ENCODE measurements at regions of chrX and their contacts with region 1.

Region 1: GRCh38 chrX:13087322-13088155 is 43.1 kb upstream of the FAM9C start:
- DNase-seq: peak; percentile 68
- H3K4me3 Mint-ChIP-seq: peak overlapping the region; percentile 81
- H3K27ac Mint-ChIP-seq: peak overlapping the region; percentile 99
- H3K4me1 Mint-ChIP-seq: peaks cover 85% of the 10 kb centered on the region
- H3K27me3 Mint-ChIP-seq: no peaks in the 10 kb centered on the region

Region 2: GRCh38 chrX:12825801-12826200 is 261.7 kb before region 1 on chrX:
- CTCF ChIA-PET with region 1: no interaction called
- POLR2A ChIA-PET with region 1: no interaction called
- DNase-seq: no peak
- H3K4me3 Mint-ChIP-seq: no peak overlapping the region
- H3K27ac Mint-ChIP-seq: no peak overlapping the region
- H3K4me1 Mint-ChIP-seq: no peaks in the 10 kb centered on the region
- H3K27me3 Mint-ChIP-seq: peaks cover 6% of the 10 kb centered on the region

Region 3: GRCh38 chrX:12946838-12947544 is 140.5 kb before region 1 on chrX:
- CTCF ChIA-PET with region 1: interaction called, 273 read pairs
- POLR2A ChIA-PET with region 1: interaction called, 428 read pairs
- DNase-seq: peak; percentile 78
- H3K4me3 Mint-ChIP-seq: peak overlapping the region; percentile 45
- H3K27ac Mint-ChIP-seq: peak overlapping the region; percentile 85
- H3K4me1 Mint-ChIP-seq: peaks cover 57% of the 10 kb centered on the region
- H3K27me3 Mint-ChIP-seq: no peaks in the 10 kb centered on the region

Region 4: GRCh38 chrX:12984629-12985319 is 102.8 kb before region 1 on chrX:
- CTCF ChIA-PET with region 1: interaction called, 210 read pairs
- POLR2A ChIA-PET with region 1: interaction called, 1,502 read pairs
- DNase-seq: peak; percentile 72
- H3K4me3 Mint-ChIP-seq: peak overlapping the region; percentile 48
- H3K27ac Mint-ChIP-seq: peak overlapping the region; percentile 100
- H3K4me1 Mint-ChIP-seq: peaks cover 74% of the 10 kb centered on the region
- H3K27me3 Mint-ChIP-seq: no peaks in the 10 kb centered on the region

Region 5: GRCh38 chrX:13005661-13006473 is 81.7 kb before region 1 on chrX:
- CTCF ChIA-PET with region 1: interaction called, 31 read pairs
- POLR2A ChIA-PET with region 1: interaction called, 380 read pairs
- DNase-seq: no peak
- H3K4me3 Mint-ChIP-seq: peak overlapping the region; percentile 55
- H3K27ac Mint-ChIP-seq: peak overlapping the region; percentile 97
- H3K4me1 Mint-ChIP-seq: peaks cover 79% of the 10 kb centered on the region
- H3K27me3 Mint-ChIP-seq: no peaks in the 10 kb centered on the region

Region 6: GRCh38 chrX:13051529-13052172 is 35.9 kb before region 1 on chrX:
- CTCF ChIA-PET with region 1: interaction called, 15 read pairs
- POLR2A ChIA-PET with region 1: interaction called, 111 read pairs
- DNase-seq: peak; percentile 20
- H3K4me3 Mint-ChIP-seq: no peak overlapping the region
- H3K27ac Mint-ChIP-seq: peak overlapping the region; percentile 92
- H3K4me1 Mint-ChIP-seq: peaks cover 65% of the 10 kb centered on the region
- H3K27me3 Mint-ChIP-seq: no peaks in the 10 kb centered on the region

Region 7: DNA sequence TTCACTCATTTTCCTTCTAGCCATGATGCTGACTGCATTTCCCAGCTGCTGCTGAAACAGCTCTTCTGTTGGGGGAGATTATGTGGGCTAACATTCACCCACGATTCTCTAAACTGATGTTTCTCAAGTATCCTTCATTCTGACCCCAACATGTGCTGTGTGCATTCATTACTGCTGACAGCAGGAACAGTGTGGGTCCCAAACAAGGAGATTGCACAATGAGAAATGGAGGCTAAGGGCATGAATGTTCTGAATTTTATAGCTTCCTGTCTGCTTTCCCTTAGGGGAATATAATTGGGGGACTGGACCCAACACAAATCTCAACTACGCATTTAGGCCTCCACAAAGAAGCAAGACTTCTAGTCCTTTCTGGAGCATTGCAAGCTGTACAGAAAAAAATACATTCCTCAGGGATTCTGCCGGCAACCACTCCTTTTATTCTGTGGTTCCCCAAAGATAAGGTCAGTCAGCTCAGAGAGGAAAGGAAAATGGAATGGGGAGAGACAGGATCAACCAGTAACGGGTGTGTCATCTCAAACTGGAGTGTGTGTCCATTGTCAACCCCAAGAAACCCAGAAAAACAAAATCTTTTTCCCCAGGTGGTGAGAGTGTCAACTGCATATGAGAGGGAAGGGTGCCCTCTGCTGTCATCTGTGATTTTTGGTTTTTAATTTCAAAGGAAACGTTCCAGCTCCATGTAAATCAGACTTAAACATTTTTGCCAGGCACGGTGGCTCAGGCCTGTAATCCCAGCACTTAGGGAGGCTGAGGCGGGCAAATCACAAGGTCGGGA is 400.4 kb after region 1 on chrX:
- CTCF ChIA-PET with region 1: interaction called, 45 read pairs
- POLR2A ChIA-PET with region 1: interaction called, 29 read pairs
- DNase-seq: peak; percentile 38
- H3K4me3 Mint-ChIP-seq: no peak overlapping the region
- H3K27ac Mint-ChIP-seq: peak overlapping the region; percentile 29
- H3K4me1 Mint-ChIP-seq: peaks cover 18% of the 10 kb centered on the region
- H3K27me3 Mint-ChIP-seq: no peaks in the 10 kb centered on the region

Measured in activated CD4-positive, alpha-beta memory T cell treated with anti-CD3 and anti-CD28 coated beads, Interleukin-2, amount 10 ng/mL, durations not matched to agents 7 days and 5 days (primary cell).